ENCODE measurements at regions of chr1 and their contacts with region 1.

Region 1: DNA sequence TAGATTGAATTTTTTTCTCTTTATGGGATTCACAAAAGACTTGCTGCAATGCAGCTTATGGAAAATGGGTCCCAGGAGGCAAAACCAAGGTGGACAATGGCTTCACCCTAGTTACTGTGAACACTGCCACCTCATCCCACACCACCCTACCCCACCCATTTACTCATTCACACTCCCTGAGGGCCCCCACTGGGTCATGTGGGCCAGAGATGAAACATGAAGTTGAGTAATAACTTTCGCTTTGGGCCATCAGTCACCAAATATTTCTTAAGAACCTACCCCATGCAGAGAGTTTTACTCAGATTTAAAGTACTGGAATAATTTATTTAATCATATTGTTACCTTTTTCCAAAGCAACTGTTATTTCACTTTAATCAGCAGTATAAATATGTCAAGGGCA is 191.8 kb downstream of the TPR start:
- DNase-seq: peak; percentile 22 to 41
- H3K4me3 ChIP-seq: no peak overlapping the region
- H3K27ac ChIP-seq: peak overlapping the region; percentile 87 to 97 (median 96)
- H3K4me1 ChIP-seq: peaks cover 28 to 30% of the 10 kb centered on the region in 2 donors
- H3K27me3 ChIP-seq: no peaks in the 10 kb centered on the region
- CTCF ChIP-seq: no peak
- POLR2A ChIP-seq: no peak

Region 2: GRCh38 chr1:186059777-186060176 is 123.4 kb before region 1 on chr1:
- intact Hi-C with region 1: loop called (anchors 10 kb)
- DNase-seq: no peak
- H3K4me3 ChIP-seq: no peak overlapping the region
- H3K27ac ChIP-seq: peak overlapping the region; percentile 22 to 28 (median 24)
- H3K4me1 ChIP-seq: peaks cover 9 to 17% of the 10 kb centered on the region in 2 donors
- H3K27me3 ChIP-seq: no peaks in the 10 kb centered on the region
- CTCF ChIP-seq: no peak
- POLR2A ChIP-seq: no peak

Measured in thyroid gland (tissue), 4 donors.